Activated CD8-positive, alpha-beta T cell treated with anti-CD3 and anti-CD28 coated beads for 36 hours (primary cell): ENCODE measurements at regions of chrX and their contacts with region 1.

Region 1: DNA sequence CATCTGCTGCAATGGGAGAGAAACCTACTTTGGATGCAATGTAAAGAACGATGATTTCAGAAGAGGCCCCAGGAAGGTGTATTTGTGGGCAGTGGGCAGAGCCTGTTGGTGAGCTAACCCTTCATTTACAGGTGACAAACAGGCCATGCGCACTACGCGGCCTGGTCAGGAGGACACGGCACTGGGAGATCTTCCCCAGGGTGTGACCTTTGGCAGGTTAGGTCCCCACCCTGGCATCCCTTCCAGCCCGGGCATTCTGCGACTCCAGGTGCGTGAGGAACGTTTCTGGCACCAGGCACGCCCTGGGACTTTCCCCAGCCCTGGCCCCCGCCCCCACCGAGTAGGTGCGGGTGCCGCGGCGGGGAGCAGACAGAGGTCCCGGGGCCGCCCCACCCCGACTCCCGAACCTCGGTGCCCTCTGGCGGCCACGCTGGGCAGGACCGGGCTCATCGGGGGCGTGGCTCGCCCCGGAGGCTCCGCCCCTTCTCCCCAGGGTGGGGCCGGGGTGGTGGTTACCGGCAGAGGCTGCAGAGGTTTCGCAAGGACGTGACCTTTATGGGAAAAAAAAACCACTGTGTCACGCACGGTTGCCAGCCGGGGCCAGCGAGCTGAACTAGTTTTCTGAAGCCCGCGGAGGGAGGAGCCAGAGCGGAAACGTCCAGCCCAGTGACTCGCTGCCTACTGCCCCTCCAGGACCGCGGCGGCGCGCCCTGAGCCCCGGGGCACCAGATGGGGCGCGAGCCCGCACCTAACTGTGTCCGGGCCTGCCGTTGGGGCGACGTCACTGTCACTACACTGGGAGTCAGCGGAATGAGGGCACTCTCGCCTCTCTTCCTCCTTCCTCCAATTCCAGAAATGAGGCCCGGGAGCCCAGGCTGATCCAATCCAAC is 5.0 kb upstream of the NYX start:
- DNase-seq: peak; percentile 83
- ATAC-seq: peak; percentile 97
- H3K4me3 Mint-ChIP-seq: peak overlapping the region; percentile 61
- H3K27ac Mint-ChIP-seq: peak overlapping the region; percentile 79
- H3K4me1 Mint-ChIP-seq: peaks cover 10% of the 10 kb centered on the region
- H3K27me3 Mint-ChIP-seq: no peaks in the 10 kb centered on the region
- CTCF ChIP-seq: peak; percentile 61

Region 2: DNA sequence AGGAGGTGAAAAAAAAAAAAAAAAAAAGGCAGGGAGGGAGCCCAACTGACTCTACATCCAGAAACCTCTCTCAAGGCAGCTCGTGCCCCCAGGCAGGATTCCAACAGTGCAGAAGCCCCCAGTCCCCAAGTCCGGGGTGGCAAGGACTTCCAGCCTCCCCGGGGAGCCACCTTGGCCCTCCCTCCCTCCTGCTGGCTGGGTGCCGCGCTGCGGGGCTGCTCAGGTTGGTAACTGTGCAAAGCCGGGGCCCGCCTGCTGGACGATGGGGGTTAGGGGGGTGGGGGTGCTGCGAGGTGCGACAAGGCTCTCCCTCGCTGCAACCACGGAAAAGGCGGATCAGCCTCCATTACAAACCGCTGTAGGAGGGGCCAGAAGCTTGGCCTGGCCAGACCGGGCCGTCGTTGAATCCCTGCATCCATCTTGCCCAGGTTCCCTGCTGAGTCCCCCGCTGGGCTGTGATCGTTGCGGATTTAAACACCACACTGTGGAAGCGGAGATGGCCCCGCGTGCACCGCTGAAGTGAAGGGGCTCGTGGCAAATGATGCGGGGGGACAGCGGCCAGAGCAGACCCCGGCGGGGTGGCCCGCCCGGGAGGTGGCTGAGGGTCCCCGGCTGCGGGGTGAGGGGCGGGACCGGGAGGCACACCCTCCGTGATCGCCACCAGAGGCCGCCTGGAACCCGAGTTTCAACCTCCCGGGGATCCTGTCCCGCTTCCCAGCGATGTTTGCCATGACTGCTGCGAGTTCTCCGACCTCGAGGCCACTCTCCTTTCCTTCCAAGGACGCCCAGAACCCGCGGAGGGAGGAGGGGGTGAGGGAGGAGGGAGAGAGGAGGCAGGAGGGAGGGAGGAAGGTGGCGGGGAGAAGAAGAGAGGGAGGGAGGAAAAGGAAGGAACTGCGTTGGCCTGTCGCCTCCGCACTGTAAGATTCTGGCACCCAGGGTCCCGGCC is 166.2 kb before region 1 on chrX:
- CTCF ChIA-PET with region 1: no interaction called
- POLR2A ChIA-PET with region 1: no interaction called
- intact Hi-C with region 1: loop called (anchors 10 kb)
- DNase-seq: peak; percentile 65
- ATAC-seq: peak; percentile 76
- H3K4me3 Mint-ChIP-seq: peak overlapping the region; percentile 73
- H3K27ac Mint-ChIP-seq: peak overlapping the region; percentile 83
- H3K4me1 Mint-ChIP-seq: peaks cover 3% of the 10 kb centered on the region
- H3K27me3 Mint-ChIP-seq: no peaks in the 10 kb centered on the region
- CTCF ChIP-seq: peak; percentile 14

Region 3: GRCh38 chrX:41481264-41482109 is 39.3 kb after region 1 on chrX:
- CTCF ChIA-PET with region 1: no interaction called
- POLR2A ChIA-PET with region 1: no interaction called
- intact Hi-C with region 1: no loop called
- DNase-seq: peak; percentile 11
- ATAC-seq: no peak
- H3K4me3 Mint-ChIP-seq: no peak overlapping the region
- H3K27ac Mint-ChIP-seq: no peak overlapping the region
- H3K4me1 Mint-ChIP-seq: no peaks in the 10 kb centered on the region
- H3K27me3 Mint-ChIP-seq: no peaks in the 10 kb centered on the region
- CTCF ChIP-seq: peak; percentile 30